Esophagus muscularis mucosa (tissue), 4 donors: ENCODE measurements at regions of chr17 and their contacts with region 1.

Region 1: DNA sequence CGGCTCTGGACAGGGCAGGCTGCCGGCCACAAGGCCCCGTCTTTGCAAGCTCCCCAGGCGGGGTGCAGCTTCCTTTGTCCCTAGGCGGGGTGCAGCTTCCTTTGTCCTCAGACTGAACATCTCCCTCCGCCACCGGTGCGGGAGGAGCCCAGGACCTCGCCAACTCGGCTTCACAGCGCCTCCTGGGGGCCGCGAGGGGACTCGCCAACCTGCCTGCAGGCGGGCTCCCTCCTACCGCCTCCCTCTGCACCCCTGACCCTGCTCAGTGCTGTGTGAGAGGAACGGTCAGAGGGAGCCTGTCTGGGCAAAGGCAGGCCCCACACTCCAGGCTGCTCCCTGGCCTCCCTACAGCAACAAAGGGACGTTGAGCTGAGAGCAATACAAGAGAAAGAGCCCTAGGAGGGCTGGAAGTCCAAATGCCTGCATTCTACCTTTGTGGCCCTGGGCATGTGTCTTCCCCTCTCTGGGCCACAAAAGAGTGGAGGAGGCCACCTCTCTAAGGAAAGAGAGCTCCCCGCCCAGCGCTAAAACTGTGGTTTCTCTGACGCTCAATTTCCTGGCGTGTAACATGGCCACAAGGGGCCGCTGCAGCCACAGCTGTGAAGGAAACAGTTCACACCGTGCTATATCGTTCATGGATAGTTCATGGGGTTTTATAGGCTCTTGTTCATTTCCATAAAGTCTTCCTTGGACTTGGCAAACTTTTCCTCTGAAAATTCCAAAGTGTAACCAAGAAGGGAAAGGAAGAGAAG is 20.9 kb upstream of the KRT19 start:
- DNase-seq: peak; percentile 93
- H3K4me3 ChIP-seq: peak overlapping the region; percentile 26 to 44 (median 36)
- H3K27ac ChIP-seq: peak overlapping the region in 2 of 4 donors; percentile 17 to 46
- H3K4me1 ChIP-seq: peaks cover 17 to 26% (median 20%) of the 10 kb centered on the region in 4 donors
- H3K27me3 ChIP-seq: no peaks in the 10 kb centered on the region
- CTCF ChIP-seq: peak; percentile 69 to 81 (median 73)
- EP300 ChIP-seq: no peak
- POLR2A ChIP-seq: no peak

Region 2: GRCh38 chr17:40857535-40857934 is 691.5 kb before region 1 on chr17:
- intact Hi-C with region 1: loop called (anchors 5 kb)
- DNase-seq: no peak
- H3K4me3 ChIP-seq: no peak overlapping the region
- H3K27ac ChIP-seq: no peak overlapping the region
- H3K4me1 ChIP-seq: peaks cover 0 to 18% (median 3%) of the 10 kb centered on the region in 4 donors
- H3K27me3 ChIP-seq: peaks cover 0 to under 1% (median 0%) of the 10 kb centered on the region in 4 donors
- CTCF ChIP-seq: no peak
- EP300 ChIP-seq: no peak
- POLR2A ChIP-seq: no peak

Region 3: GRCh38 chr17:41403798-41404671 is 145.0 kb before region 1 on chr17:
- intact Hi-C with region 1: no loop called
- DNase-seq: no peak
- H3K4me3 ChIP-seq: no peak overlapping the region
- H3K27ac ChIP-seq: peak overlapping the region; percentile 28 to 71 (median 54)
- H3K4me1 ChIP-seq: peaks cover 0 to 36% (median 32%) of the 10 kb centered on the region in 4 donors
- H3K27me3 ChIP-seq: no peaks in the 10 kb centered on the region
- CTCF ChIP-seq: no peak
- EP300 ChIP-seq: no peak
- POLR2A ChIP-seq: no peak